ENCODE measurements at regions of chr3 and their contacts with region 1.

Region 1: GRCh38 chr3:68893600-68894239 is 38.6 kb downstream of the TAFA4 start:
- DNase-seq: peak; percentile 22
- CTCF ChIP-seq: peak; percentile 41

Region 2: GRCh38 chr3:68909719-68910118 is 16.0 kb after region 1 on chr3:
- CTCF ChIA-PET with region 1: interaction called, 28 read pairs
- POLR2A ChIA-PET with region 1: no interaction called
- DNase-seq: no peak
- CTCF ChIP-seq: no peak

Measured in GM10248 (cell line).